Naive thymus-derived CD8-positive, alpha-beta T cell (primary cell): ENCODE measurements at regions of chr4 and their contacts with region 1.

Region 1: DNA sequence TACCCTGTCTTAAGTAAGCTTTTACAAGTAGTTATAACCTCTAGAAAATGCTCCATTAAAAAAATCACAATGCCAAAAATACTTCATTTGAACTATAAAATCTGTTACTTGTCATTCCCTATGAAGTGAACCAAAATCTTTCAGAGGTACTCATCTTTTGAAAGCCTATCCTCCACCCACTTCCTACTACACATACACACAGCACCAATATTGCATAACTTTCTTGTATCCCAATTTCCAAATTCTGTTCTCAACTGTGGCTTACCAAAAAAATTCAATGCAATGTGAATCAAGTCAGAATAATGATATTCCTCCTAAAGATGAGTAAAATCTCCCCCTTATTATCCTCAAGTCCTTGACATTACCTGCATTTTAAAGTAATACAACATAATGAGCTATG is 15.9 kb downstream of the DHX15 start:
- DNase-seq: no peak
- ATAC-seq: no peak
- H3K4me3 Mint-ChIP-seq: peak overlapping the region in 4 of 10 donors; percentile 3 to 56 (median 40)
- H3K27ac Mint-ChIP-seq: peak overlapping the region in 2 of 10 donors; percentile 9 to 14
- H3K4me1 Mint-ChIP-seq: peaks cover 42 to 92% (median 83%) of the 10 kb centered on the region in 4 donors
- H3K27me3 Mint-ChIP-seq: no peaks in the 10 kb centered on the region

Region 2: GRCh38 chr4:24529555-24529954 is 38.9 kb before region 1 on chr4:
- POLR2A ChIA-PET with region 1: no interaction called
- DNase-seq: no peak
- ATAC-seq: no peak
- H3K4me3 Mint-ChIP-seq: no peak overlapping the region
- H3K27ac Mint-ChIP-seq: peak overlapping the region in 1 of 10 donors; percentile 48
- H3K4me1 Mint-ChIP-seq: peaks cover 0 to 4% (median 1%) of the 10 kb centered on the region in 4 donors
- H3K27me3 Mint-ChIP-seq: no peaks in the 10 kb centered on the region

Region 3: GRCh38 chr4:24584175-24584850 is 15.9 kb after region 1 on chr4 and contains the start of gene DHX15:
- POLR2A ChIA-PET with region 1: interaction called, 12 read pairs
- DNase-seq: peak; percentile 87 to 96 (median 93)
- ATAC-seq: peak; percentile 92 to 95
- H3K4me3 Mint-ChIP-seq: peak within 1 kb of the TSS; percentile 86 to 100 (median 98)
- H3K27ac Mint-ChIP-seq: peak within 1 kb of the TSS; percentile 96 to 99 (median 98)
- H3K4me1 Mint-ChIP-seq: peaks cover 17 to 44% (median 39%) of the 10 kb centered on the region in 4 donors
- H3K27me3 Mint-ChIP-seq: no peaks in the 10 kb centered on the region
- polyA plus RNA-seq, gene DHX15: 36.5 to 49.4 (median 38.0) TPM

Region 4: GRCh38 chr4:24642981-24643547 is 74.6 kb after region 1 on chr4:
- POLR2A ChIA-PET with region 1: no interaction called
- DNase-seq: no peak
- ATAC-seq: no peak
- H3K4me3 Mint-ChIP-seq: no peak overlapping the region
- H3K27ac Mint-ChIP-seq: no peak overlapping the region
- H3K4me1 Mint-ChIP-seq: peaks cover 0 to 2% (median 0%) of the 10 kb centered on the region in 4 donors
- H3K27me3 Mint-ChIP-seq: peaks cover 0 to 17% (median 9%) of the 10 kb centered on the region in 5 donors